IMR-90 (cell line): ENCODE measurements at regions of chr21 and their contacts with region 1.

Region 1: GRCh38 chr21:16330082-16330907 is 600.5 kb downstream of the USP25 start:
- DNase-seq: peak; percentile 75
- ATAC-seq: peak; percentile 97
- H3K4me3 ChIP-seq: no peak overlapping the region
- H3K27ac ChIP-seq: no peak overlapping the region
- H3K4me1 ChIP-seq: no peaks in the 10 kb centered on the region
- H3K27me3 ChIP-seq: no peaks in the 10 kb centered on the region
- CTCF ChIP-seq: peak; percentile 78
- POLR2A ChIP-seq: no peak
- RAD21 ChIP-seq: peak; percentile 70

Region 2: DNA sequence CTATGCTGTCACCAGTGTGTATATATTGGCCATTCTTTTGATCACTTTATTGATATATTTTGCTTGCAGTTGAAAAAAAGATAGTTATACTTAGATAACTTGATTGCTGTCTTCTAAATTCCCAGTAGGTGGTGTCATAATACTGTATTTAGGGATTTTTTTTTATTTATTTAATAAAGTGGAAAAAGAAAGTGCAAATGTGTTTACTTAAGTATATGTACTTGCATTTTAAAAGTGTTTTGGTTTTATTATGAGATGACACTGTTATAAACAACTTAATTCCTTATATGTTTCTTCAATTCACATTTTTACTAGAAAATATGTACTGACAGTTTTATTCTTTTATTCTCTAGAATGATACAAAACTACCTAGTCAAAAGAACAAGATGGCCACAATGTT is 435.7 kb before region 1 on chr21:
- CTCF ChIA-PET with region 1: no interaction called
- POLR2A ChIA-PET with region 1: no interaction called
- dilution Hi-C with region 1: no loop called
- in situ Hi-C with region 1: no loop called
- intact Hi-C with region 1: loop called (anchors 2 kb)
- DNase-seq: peak; percentile 38
- ATAC-seq: peak; percentile 74
- H3K4me3 ChIP-seq: no peak overlapping the region
- H3K27ac ChIP-seq: no peak overlapping the region
- H3K4me1 ChIP-seq: peaks cover 2% of the 10 kb centered on the region; the same call in 1 of the 2 replicates
- H3K27me3 ChIP-seq: no peaks in the 10 kb centered on the region
- CTCF ChIP-seq: peak; percentile 58
- POLR2A ChIP-seq: no peak
- RAD21 ChIP-seq: peak; percentile 52

Region 3: DNA sequence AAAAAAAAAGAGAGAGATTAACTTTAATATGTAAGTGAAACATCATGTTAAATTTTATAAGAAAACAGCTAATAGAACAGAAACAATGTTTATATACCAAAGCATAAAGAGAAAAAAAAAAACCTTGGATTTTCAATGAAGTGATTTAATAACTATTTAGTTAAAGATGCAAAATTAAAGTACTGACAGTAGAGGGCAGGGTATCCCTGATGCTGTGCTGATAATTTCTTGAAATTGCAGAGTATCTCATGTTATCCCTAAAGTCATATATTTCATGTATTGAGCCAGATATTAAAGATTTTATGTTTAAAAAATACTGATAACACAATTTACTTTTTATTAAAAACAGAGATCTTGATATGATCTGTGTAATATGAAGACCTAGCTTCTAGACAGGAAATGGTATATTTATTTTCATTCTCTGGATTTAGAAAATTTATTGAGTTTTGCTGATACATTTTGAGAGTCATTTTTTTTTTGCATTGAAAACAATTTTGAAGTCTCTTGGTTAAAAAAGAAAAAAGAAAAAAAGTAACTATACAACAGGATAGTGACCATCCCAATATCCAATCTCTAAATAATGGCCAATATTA is 327.3 kb before region 1 on chr21:
- CTCF ChIA-PET with region 1: no interaction called
- POLR2A ChIA-PET with region 1: no interaction called
- dilution Hi-C with region 1: no loop called
- in situ Hi-C with region 1: loop called (anchors 5 kb)
- intact Hi-C with region 1: loop called (anchors 1 kb)
- DNase-seq: peak; percentile 51
- ATAC-seq: peak; percentile 75; the same call in 1 of the 2 replicates
- H3K4me3 ChIP-seq: no peak overlapping the region
- H3K27ac ChIP-seq: no peak overlapping the region
- H3K4me1 ChIP-seq: no peaks in the 10 kb centered on the region
- H3K27me3 ChIP-seq: no peaks in the 10 kb centered on the region
- CTCF ChIP-seq: peak; percentile 67
- POLR2A ChIP-seq: no peak
- RAD21 ChIP-seq: peak; percentile 67

Region 4: GRCh38 chr21:16551101-16551695 is 220.9 kb after region 1 on chr21:
- CTCF ChIA-PET with region 1: no interaction called
- POLR2A ChIA-PET with region 1: no interaction called
- dilution Hi-C with region 1: no loop called
- in situ Hi-C with region 1: no loop called
- intact Hi-C with region 1: no loop called
- DNase-seq: no peak
- ATAC-seq: no peak
- H3K4me3 ChIP-seq: no peak overlapping the region
- H3K27ac ChIP-seq: no peak overlapping the region
- H3K4me1 ChIP-seq: peaks cover 2% of the 10 kb centered on the region; the same call in 1 of the 2 replicates
- H3K27me3 ChIP-seq: no peaks in the 10 kb centered on the region
- CTCF ChIP-seq: no peak
- POLR2A ChIP-seq: no peak
- RAD21 ChIP-seq: no peak

Region 5: DNA sequence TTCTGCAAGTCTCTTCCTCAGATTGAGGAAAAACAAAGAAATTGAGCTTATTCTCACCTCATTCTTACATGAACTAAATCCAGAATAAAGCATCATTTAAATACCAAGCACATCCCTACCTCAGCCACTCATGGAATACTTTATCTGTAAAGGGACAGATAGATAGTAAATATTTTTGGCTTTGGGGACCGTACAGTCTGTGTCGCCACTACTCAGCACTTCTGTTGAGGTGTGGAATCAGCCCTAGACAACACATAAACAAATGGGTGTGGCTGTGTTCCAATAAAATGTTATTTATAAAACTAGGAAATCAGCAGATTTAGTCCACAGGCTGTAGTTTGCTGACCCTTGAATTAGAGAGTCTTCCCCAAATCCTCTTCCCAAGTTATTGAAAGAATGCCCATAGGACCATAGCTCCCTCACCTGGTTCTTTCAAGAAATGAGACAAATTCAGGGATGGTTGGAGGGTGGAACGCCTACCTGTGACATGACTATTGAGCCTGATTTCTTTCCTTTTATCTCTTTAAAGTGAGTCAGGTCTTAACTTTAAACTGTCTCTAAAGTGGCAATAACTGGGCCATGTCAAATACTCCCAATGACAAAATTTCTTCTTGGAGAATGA is 278.0 kb after region 1 on chr21:
- CTCF ChIA-PET with region 1: no interaction called
- POLR2A ChIA-PET with region 1: no interaction called
- dilution Hi-C with region 1: no loop called
- in situ Hi-C with region 1: no loop called
- intact Hi-C with region 1: loop called (anchors 10 kb)
- DNase-seq: no peak
- ATAC-seq: no peak
- H3K4me3 ChIP-seq: no peak overlapping the region
- H3K27ac ChIP-seq: no peak overlapping the region
- H3K4me1 ChIP-seq: no peaks in the 10 kb centered on the region
- H3K27me3 ChIP-seq: no peaks in the 10 kb centered on the region
- CTCF ChIP-seq: peak; percentile 26
- POLR2A ChIP-seq: no peak
- RAD21 ChIP-seq: peak; percentile 41

Region 6: DNA sequence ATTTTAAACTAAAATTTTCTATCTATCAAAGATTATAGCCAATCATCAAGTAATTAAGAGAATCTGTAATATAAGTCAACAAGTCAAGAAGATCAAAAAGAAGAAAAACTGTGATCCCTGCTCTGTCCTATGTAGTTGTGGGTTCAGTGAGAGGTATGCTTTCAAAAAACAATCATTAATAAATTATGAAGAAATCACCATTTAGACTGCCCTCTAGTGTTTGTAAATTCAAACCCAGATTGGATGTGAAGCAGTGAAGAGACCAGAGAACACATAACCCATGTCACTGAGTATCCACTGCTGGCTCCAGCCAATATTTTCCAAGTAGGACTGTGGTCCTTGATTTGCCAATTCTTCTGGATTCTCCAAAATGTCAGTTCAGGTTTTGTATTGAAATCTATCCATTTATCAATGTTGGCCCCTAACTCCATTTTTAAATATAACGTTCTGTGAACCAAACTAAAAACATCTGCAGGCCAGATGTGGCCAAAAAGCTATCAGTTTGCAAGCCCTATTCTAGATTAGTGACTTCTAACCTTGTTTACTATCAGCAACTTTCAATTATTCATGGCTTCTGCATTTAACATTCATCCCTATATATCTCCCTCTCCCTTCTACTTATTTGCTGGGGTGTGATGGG is 715.0 kb after region 1 on chr21:
- CTCF ChIA-PET with region 1: no interaction called
- POLR2A ChIA-PET with region 1: no interaction called
- dilution Hi-C with region 1: no loop called
- in situ Hi-C with region 1: no loop called
- intact Hi-C with region 1: loop called (anchors 10 kb)
- DNase-seq: peak; percentile 15
- ATAC-seq: peak; percentile 84
- H3K4me3 ChIP-seq: no peak overlapping the region
- H3K27ac ChIP-seq: no peak overlapping the region
- H3K4me1 ChIP-seq: no peaks in the 10 kb centered on the region; the same call in 1 of the 2 replicates
- H3K27me3 ChIP-seq: no peaks in the 10 kb centered on the region
- CTCF ChIP-seq: peak; percentile 47
- POLR2A ChIP-seq: no peak
- RAD21 ChIP-seq: peak; percentile 36; the same call in 1 of the 2 replicates